Activated naive CD8-positive, alpha-beta T cell treated with anti-CD3 and anti-CD28 coated beads, Interleukin-2, amount 10 ng/mL, durations not matched to agents 7 days and 5 days (primary cell): ENCODE measurements at regions of chr9 and their contacts with region 1.

Region 1: DNA sequence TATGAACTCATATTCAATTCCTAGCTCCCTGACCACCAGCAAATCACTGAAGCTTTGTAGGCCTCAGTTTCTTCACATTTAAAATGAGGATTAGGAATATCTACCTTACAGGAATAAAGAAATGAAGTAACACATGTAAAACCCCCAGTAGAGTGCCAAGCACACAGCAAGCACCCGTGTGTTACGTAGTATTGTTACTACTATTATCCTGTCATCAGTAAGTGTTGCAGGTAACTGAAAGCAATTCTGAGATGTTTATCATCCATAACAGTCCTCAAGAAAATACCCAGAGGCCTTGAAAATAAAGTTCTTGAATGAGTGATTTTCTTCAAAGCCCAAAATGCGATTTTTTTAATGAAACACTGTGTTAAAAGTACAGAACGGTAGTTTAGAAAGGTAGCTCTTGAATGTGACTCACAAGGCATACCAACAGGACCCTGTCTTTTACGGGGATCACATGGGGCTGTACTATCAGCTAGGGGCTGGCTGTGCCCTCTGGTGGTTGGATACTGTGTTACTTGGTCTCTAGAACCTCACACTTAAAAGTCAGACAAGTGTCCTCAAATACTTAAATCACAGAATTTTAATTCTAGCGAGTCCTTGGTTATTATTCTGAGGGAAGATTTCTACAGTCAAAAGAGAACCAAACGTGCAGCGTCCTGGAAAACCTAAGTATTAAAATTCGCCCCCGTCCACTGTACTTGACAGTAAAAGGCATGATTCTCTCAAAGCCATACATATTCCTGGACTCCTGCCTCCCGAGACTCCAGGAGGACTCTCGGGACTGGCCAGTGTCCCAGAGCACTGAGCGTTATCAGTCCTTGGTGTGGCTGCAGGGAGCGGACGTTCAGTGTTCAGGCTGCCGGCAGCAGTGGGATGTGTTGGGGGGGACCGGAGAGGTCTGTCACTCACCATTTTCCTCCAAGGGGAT is 725 bp downstream of the NDUFB6 start:
- DNase-seq: peak; percentile 45
- ATAC-seq: peak; percentile 84
- H3K4me3 Mint-ChIP-seq: peak overlapping the region; percentile 99
- H3K27ac Mint-ChIP-seq: peak overlapping the region; percentile 100
- H3K4me1 Mint-ChIP-seq: peaks cover 18% of the 10 kb centered on the region
- H3K27me3 Mint-ChIP-seq: no peaks in the 10 kb centered on the region

Region 2: GRCh38 chr9:32339424-32339823 is 232.8 kb before region 1 on chr9:
- POLR2A ChIA-PET with region 1: no interaction called
- DNase-seq: no peak
- ATAC-seq: no peak
- H3K4me3 Mint-ChIP-seq: no peak overlapping the region
- H3K27ac Mint-ChIP-seq: no peak overlapping the region
- H3K4me1 Mint-ChIP-seq: peaks cover 5% of the 10 kb centered on the region
- H3K27me3 Mint-ChIP-seq: no peaks in the 10 kb centered on the region

Region 3: DNA sequence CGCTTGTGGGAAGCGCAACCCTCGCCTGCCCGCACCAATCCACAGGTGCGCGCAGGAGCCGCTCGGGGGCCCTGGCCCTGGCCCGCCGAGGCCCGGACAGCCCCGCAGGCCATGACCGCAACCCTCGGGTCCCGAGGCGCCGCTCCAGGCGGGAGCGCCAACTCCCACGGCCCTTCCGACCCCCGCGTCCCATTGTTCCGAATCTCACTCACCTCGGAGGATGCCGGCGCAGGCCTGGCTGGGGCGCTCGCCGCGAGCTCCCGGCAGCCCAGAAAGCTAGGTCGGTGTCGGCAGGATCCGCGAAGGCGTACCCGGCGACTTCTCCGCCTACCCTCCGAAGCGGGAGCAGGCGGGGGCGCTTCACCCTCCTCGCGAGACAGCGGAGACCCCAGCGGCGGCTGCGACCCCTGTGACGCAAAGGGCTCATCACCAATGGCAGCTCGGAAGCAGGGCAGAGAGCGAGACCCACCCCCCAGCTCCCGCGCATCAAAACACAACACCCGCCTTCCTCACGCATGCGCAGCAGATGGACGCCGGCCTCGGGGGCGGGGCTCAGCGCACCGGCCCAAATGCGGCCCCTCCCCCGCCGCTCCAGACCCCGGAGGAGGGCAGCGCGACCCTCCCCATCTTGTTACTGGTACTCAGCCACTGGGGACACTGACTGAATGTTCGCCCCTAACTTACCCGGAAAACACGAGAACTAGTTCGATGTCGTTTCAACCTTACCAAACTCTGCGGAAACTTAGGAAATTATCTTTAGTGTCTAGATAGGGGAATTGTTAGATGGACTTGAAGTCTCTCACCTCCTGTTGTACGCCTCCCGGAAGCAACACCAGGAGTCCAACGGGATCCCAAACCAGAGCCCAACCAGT is 21.4 kb before region 1 on chr9:
- POLR2A ChIA-PET with region 1: interaction called, 39 read pairs
- DNase-seq: peak; percentile 94
- ATAC-seq: peak; percentile 77
- H3K4me3 Mint-ChIP-seq: peak overlapping the region; percentile 98
- H3K27ac Mint-ChIP-seq: peak overlapping the region; percentile 92
- H3K4me1 Mint-ChIP-seq: peaks cover 28% of the 10 kb centered on the region
- H3K27me3 Mint-ChIP-seq: no peaks in the 10 kb centered on the region